CD4-positive, alpha-beta T cell (primary cell): ENCODE measurements at regions of chr11 and their contacts with region 1.

Region 1: GRCh38 chr11:95231127-95231880 is at the start of gene SESN3:
- DNase-seq: peak; percentile 96 to 99 (median 98)
- ATAC-seq: peak; percentile 88
- H3K4me3 ChIP-seq: peak within 1 kb of the TSS; percentile 82
- H3K4me3 Mint-ChIP-seq: peak within 1 kb of the TSS; percentile 98
- H3K27ac ChIP-seq: peak within 1 kb of the TSS; percentile 69 to 82
- H3K27ac Mint-ChIP-seq: peak within 1 kb of the TSS; percentile 89
- H3K4me1 ChIP-seq: peaks cover 16% of the 10 kb centered on the region
- H3K4me1 Mint-ChIP-seq: peaks cover 47% of the 10 kb centered on the region
- H3K27me3 ChIP-seq: no peaks in the 10 kb centered on the region
- H3K27me3 Mint-ChIP-seq: no peaks in the 10 kb centered on the region
- CTCF ChIP-seq: no peak
- total RNA-seq, gene SESN3: 63.9 to 69.1 TPM

Region 2: GRCh38 chr11:95150946-95151684 is 80.2 kb before region 1 on chr11:
- CTCF ChIA-PET with region 1: interaction called, 11 read pairs
- POLR2A ChIA-PET with region 1: interaction called, 82 read pairs
- intact Hi-C with region 1: loop called (anchors 1 to 5 kb)
- DNase-seq: peak; percentile 83 to 96 (median 88)
- ATAC-seq: peak; percentile 92
- H3K4me3 ChIP-seq: peak overlapping the region; percentile 74
- H3K4me3 Mint-ChIP-seq: peak overlapping the region; percentile 92
- H3K27ac ChIP-seq: peak overlapping the region; percentile 69 to 72
- H3K27ac Mint-ChIP-seq: peak overlapping the region; percentile 97
- H3K4me1 ChIP-seq: peaks cover 49% of the 10 kb centered on the region
- H3K4me1 Mint-ChIP-seq: peaks cover 37% of the 10 kb centered on the region
- H3K27me3 ChIP-seq: no peaks in the 10 kb centered on the region
- H3K27me3 Mint-ChIP-seq: peaks cover 4% of the 10 kb centered on the region
- CTCF ChIP-seq: peak; percentile 97

Region 3: DNA sequence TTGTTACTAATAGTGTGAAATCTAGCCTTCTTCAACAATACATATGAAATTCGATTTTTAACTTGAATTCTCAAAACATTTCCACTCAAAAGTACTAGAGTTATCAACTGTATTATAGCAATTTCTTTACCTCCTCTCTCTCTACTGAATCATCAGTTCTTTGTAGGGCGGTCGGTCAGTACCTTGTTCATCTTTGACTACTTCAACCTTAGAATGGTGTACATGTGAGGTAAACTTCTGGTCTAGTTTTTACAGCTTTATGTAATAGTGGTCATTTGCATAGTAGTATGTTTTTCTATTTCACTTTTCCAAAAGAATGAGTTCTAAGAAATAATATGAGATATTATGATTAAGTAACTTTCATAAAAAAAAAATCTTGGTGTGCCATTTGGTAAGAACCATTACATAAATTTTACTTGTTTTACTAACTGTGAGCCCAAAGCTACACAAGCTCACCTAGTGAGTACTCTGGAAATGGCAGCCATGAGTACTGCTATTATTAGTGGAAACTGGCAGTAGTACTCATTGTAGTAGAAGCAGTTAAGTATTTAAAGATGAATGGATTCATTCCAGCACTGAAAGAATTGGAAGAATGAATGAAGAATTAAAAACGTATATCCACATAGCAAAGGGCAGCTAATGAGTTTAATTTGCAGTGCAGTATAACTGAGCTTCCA is 30.4 kb before region 1 on chr11:
- CTCF ChIA-PET with region 1: interaction called, 3 read pairs
- POLR2A ChIA-PET with region 1: interaction called, 17 read pairs
- intact Hi-C with region 1: no loop called
- DNase-seq: no peak
- ATAC-seq: no peak
- H3K4me3 ChIP-seq: no peak overlapping the region
- H3K4me3 Mint-ChIP-seq: no peak overlapping the region
- H3K27ac ChIP-seq: no peak overlapping the region
- H3K27ac Mint-ChIP-seq: no peak overlapping the region
- H3K4me1 ChIP-seq: no peaks in the 10 kb centered on the region
- H3K4me1 Mint-ChIP-seq: peaks cover 75% of the 10 kb centered on the region
- H3K27me3 ChIP-seq: no peaks in the 10 kb centered on the region
- H3K27me3 Mint-ChIP-seq: no peaks in the 10 kb centered on the region
- CTCF ChIP-seq: no peak

Region 4: GRCh38 chr11:95296621-95297025 is 65.3 kb after region 1 on chr11:
- CTCF ChIA-PET with region 1: no interaction called
- POLR2A ChIA-PET with region 1: interaction called, 21 read pairs
- intact Hi-C with region 1: loop called in 1 of 2 experiments (anchors 5 kb)
- DNase-seq: peak in 2 of 14 experiments; percentile 22 to 31
- ATAC-seq: no peak
- H3K4me3 ChIP-seq: no peak overlapping the region
- H3K4me3 Mint-ChIP-seq: no peak overlapping the region
- H3K27ac ChIP-seq: no peak overlapping the region
- H3K27ac Mint-ChIP-seq: no peak overlapping the region
- H3K4me1 ChIP-seq: peaks cover 16% of the 10 kb centered on the region
- H3K4me1 Mint-ChIP-seq: peaks cover 39% of the 10 kb centered on the region
- H3K27me3 ChIP-seq: no peaks in the 10 kb centered on the region
- H3K27me3 Mint-ChIP-seq: no peaks in the 10 kb centered on the region
- CTCF ChIP-seq: no peak

Region 5: GRCh38 chr11:95505927-95506426 is 274.7 kb after region 1 on chr11:
- CTCF ChIA-PET with region 1: no interaction called
- POLR2A ChIA-PET with region 1: no interaction called
- intact Hi-C with region 1: no loop called
- DNase-seq: peak in 2 of 14 experiments; percentile 18 to 22
- ATAC-seq: no peak
- H3K4me3 ChIP-seq: no peak overlapping the region
- H3K4me3 Mint-ChIP-seq: no peak overlapping the region
- H3K27ac ChIP-seq: no peak overlapping the region
- H3K27ac Mint-ChIP-seq: no peak overlapping the region
- H3K4me1 ChIP-seq: no peaks in the 10 kb centered on the region
- H3K4me1 Mint-ChIP-seq: no peaks in the 10 kb centered on the region
- H3K27me3 ChIP-seq: no peaks in the 10 kb centered on the region
- H3K27me3 Mint-ChIP-seq: no peaks in the 10 kb centered on the region
- CTCF ChIP-seq: no peak

Region 6: DNA sequence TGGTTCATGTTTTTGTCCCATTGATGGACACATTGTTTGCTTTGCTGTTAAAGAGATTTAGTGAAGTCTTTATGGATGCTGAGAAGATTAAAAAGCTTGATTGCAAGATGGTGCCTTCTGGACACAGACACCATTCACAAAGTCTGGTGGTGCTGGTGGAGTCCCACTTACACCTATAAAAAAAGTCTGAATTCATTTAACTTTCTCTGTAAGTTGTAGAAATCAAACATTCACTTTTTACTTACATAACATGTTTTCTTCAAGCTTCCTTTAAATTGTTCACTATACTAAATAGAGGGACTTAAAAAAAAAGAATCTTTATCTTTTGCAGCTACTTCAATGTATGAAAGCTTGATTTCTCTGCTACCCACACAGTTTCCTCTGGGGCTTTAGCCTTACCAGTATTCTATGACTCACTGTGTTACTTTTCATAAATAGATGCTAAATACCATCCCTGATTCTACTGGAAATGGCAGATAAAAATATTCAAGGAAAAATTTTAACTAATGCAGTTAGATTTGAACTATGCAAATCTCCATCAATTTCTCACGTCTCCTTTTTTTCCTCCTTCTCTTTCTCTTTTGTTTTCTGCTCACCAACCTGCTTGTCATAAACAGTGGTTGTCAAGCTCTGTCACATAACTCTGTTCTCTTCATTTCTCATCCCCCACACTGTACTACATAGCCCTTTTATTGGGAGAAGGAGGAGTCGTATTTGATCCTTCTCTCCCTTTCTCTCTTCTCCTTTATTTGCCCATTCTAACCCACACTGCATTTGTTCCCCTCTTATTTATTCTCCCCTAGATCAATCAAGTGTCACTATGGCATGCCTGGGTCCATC is 468.5 kb after region 1 on chr11:
- CTCF ChIA-PET with region 1: interaction called, 3 read pairs
- POLR2A ChIA-PET with region 1: interaction called, 54 read pairs
- intact Hi-C with region 1: loop called (anchors 2 kb)
- DNase-seq: peak in 4 of 14 experiments; percentile 33 to 60 (median 52)
- ATAC-seq: peak; percentile 82
- H3K4me3 ChIP-seq: peak overlapping the region; percentile 45
- H3K4me3 Mint-ChIP-seq: peak overlapping the region; percentile 66
- H3K27ac ChIP-seq: peak overlapping the region; percentile 78 to 87
- H3K27ac Mint-ChIP-seq: peak overlapping the region; percentile 92
- H3K4me1 ChIP-seq: peaks cover 56% of the 10 kb centered on the region
- H3K4me1 Mint-ChIP-seq: peaks cover 48% of the 10 kb centered on the region
- H3K27me3 ChIP-seq: no peaks in the 10 kb centered on the region
- H3K27me3 Mint-ChIP-seq: no peaks in the 10 kb centered on the region
- CTCF ChIP-seq: no peak

Region 7: GRCh38 chr11:96279018-96279895 is 1048.0 kb after region 1 on chr11:
- CTCF ChIA-PET with region 1: no interaction called
- POLR2A ChIA-PET with region 1: no interaction called
- intact Hi-C with region 1: no loop called
- DNase-seq: peak in 1 of 14 experiments; percentile 42
- ATAC-seq: peak; percentile 70
- H3K4me3 ChIP-seq: no peak overlapping the region
- H3K4me3 Mint-ChIP-seq: peak overlapping the region; percentile 18
- H3K27ac ChIP-seq: no peak overlapping the region
- H3K27ac Mint-ChIP-seq: peak overlapping the region; percentile 48
- H3K4me1 ChIP-seq: peaks cover 10% of the 10 kb centered on the region
- H3K4me1 Mint-ChIP-seq: peaks cover 75% of the 10 kb centered on the region
- H3K27me3 ChIP-seq: no peaks in the 10 kb centered on the region
- H3K27me3 Mint-ChIP-seq: no peaks in the 10 kb centered on the region
- CTCF ChIP-seq: no peak

Region 8: GRCh38 chr11:96389720-96390487 is 1158.6 kb after region 1 on chr11 and contains the starts of genes CCDC82 and JRKL:
- CTCF ChIA-PET with region 1: no interaction called
- POLR2A ChIA-PET with region 1: interaction called, 4 read pairs
- intact Hi-C with region 1: loop called in 1 of 2 experiments (anchors 5 kb)
- DNase-seq: peak; percentile 96 to 99 (median 98)
- ATAC-seq: peak; percentile 96
- H3K4me3 ChIP-seq: peak within 1 kb of the TSS; percentile 86
- H3K4me3 Mint-ChIP-seq: peak within 1 kb of the TSS; percentile 91
- H3K27ac ChIP-seq: peak within 1 kb of the TSS; percentile 84
- H3K27ac Mint-ChIP-seq: peak within 1 kb of the TSS; percentile 88
- H3K4me1 ChIP-seq: peaks cover 18% of the 10 kb centered on the region
- H3K4me1 Mint-ChIP-seq: peaks cover 51% of the 10 kb centered on the region
- H3K27me3 ChIP-seq: no peaks in the 10 kb centered on the region
- H3K27me3 Mint-ChIP-seq: no peaks in the 10 kb centered on the region
- CTCF ChIP-seq: no peak
- total RNA-seq, gene CCDC82: 23.7 to 24.4 TPM
- total RNA-seq, gene JRKL: 3.0 to 3.5 TPM